Activated CD4-positive, alpha-beta memory T cell treated with anti-CD3 and anti-CD28 coated beads, Interleukin-2, amount 10 ng/mL, durations not matched to agents 7 days and 5 days (primary cell): ENCODE measurements at regions of chr18 and their contacts with region 1.

Region 1: GRCh38 chr18:35290073-35290735 is at the start of gene ZSCAN30:
- DNase-seq: peak; percentile 96
- H3K4me3 Mint-ChIP-seq: peak within 1 kb of the TSS; percentile 90
- H3K27ac Mint-ChIP-seq: peak within 1 kb of the TSS; percentile 90
- H3K4me1 Mint-ChIP-seq: peaks cover 42% of the 10 kb centered on the region
- H3K27me3 Mint-ChIP-seq: no peaks in the 10 kb centered on the region
- total RNA-seq, gene ZSCAN30: 14.6 to 19.2 TPM

Region 2: DNA sequence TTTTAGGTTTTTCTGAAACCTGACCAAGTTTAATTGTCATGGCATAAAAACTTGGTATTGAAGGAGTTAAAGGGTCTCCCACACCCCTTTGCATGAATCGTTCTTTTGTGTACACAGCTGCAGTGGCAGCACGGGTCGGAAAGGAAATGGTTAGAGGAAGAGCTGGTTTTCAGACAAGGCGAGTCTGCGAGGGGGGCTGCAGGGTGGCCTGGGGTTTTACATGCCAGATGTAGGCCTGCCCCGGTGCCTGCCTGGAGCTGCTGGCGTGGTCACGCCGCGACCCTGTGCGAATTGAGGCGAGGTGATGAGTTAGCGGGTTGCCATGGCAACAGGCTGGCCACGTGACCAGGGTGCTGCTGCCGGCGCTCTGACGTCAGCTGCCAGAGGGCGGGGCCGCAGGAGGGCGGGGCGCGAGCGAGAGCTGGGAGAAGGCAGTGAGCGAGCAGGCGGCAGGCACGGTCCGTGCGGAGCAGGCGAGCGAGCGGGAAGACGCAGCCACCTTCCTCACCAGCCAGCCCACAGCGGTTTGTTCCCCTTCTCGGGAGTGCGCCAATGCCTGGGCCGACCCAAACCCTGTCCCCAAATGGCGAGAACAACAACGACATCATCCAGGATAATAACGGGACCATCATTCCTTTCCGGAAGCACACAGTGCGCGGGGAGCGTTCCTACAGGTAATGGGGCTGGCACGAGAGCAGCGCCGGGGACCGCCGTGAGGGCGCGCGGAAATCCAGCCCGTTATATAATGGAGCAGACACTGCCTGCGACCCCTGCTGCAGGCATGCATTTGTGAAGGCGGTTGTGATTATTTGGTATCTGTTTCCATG is 249.0 kb before region 1 on chr18 and contains the start of gene MAPRE2:
- CTCF ChIA-PET with region 1: no interaction called
- POLR2A ChIA-PET with region 1: interaction called, 10 read pairs
- DNase-seq: peak; percentile 99
- H3K4me3 Mint-ChIP-seq: peak within 1 kb of the TSS; percentile 92
- H3K27ac Mint-ChIP-seq: peak within 1 kb of the TSS; percentile 88
- H3K4me1 Mint-ChIP-seq: peaks cover 45% of the 10 kb centered on the region
- H3K27me3 Mint-ChIP-seq: no peaks in the 10 kb centered on the region
- total RNA-seq, gene MAPRE2: 39.2 to 45.2 TPM

Region 3: GRCh38 chr18:35240664-35241447 is 49.3 kb before region 1 on chr18 and contains the start of gene ZNF397:
- CTCF ChIA-PET with region 1: interaction called, 4 read pairs
- POLR2A ChIA-PET with region 1: interaction called, 45 read pairs
- DNase-seq: peak; percentile 95
- H3K4me3 Mint-ChIP-seq: peak within 1 kb of the TSS; percentile 92
- H3K27ac Mint-ChIP-seq: peak within 1 kb of the TSS; percentile 95
- H3K4me1 Mint-ChIP-seq: peaks cover 10% of the 10 kb centered on the region
- H3K27me3 Mint-ChIP-seq: no peaks in the 10 kb centered on the region
- total RNA-seq, gene ZNF397: 14.4 to 16.1 TPM

Region 4: DNA sequence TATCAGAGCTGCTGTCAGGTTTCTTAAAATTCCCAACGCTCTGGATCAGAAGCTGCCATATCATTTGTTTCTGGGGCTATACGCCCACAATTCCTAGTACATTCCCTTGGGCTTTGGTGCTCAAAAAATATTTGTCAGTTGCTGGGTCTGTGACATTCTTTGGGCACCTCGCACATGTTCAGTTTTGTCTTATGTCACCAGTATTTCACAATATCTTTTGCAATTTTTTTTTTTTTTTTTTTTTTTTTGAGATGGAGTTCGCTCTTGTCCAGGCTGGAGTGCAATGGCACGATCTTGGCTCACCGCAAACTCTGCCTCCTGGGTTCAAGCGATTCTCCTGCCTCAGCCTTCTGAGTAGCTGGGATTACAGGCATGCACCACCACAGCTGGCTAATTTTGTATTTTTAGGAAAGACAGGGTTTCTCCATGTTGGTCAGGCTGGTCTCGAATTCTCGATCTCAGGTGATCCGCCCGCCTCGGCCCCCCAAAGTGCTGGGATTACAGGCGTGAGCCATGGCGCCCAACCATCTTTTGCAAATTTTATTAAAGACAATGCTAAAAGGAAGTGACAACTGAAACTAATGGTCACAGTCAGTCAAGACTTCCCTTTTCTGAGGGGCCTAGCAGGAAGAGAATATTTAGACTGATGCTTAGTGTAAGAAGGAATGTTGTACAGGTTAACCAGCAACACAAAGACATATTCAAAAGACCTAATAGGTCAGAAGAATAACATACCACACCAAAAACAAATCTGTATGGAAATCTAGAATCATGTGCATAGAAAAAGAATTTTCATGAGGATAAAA is 42.6 kb before region 1 on chr18:
- CTCF ChIA-PET with region 1: interaction called, 4 read pairs
- POLR2A ChIA-PET with region 1: interaction called, 13 read pairs
- DNase-seq: no peak
- H3K4me3 Mint-ChIP-seq: no peak overlapping the region
- H3K27ac Mint-ChIP-seq: no peak overlapping the region
- H3K4me1 Mint-ChIP-seq: no peaks in the 10 kb centered on the region
- H3K27me3 Mint-ChIP-seq: no peaks in the 10 kb centered on the region

Region 5: DNA sequence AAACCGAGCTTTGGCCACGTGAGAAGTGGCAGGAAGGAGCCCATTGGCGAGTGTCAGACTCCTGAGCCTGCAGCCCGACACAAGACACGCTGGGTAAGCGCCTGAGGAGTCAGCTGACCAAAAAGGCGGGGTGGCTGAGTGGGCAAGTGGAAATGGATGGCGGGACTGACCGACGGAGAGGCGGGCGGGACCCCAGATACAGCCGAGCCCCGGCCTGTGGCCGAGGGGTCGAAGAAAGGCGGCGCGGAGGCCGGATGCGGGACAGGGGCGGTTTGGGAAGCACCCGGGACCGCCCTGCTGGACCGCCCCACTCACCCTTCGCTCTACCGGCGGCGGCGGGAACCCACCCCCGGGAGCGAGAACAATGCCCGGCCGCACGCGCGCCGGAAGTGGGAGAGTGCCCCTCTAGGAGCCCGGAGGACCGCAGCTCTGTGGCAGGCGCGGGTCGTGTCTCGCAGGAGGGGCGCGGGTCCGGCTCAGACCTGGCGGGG is 23.0 kb before region 1 on chr18:
- CTCF ChIA-PET with region 1: no interaction called
- POLR2A ChIA-PET with region 1: interaction called, 27 read pairs
- DNase-seq: peak; percentile 49
- H3K4me3 Mint-ChIP-seq: peak overlapping the region; percentile 76
- H3K27ac Mint-ChIP-seq: peak overlapping the region; percentile 66
- H3K4me1 Mint-ChIP-seq: peaks cover 21% of the 10 kb centered on the region
- H3K27me3 Mint-ChIP-seq: no peaks in the 10 kb centered on the region

Region 6: DNA sequence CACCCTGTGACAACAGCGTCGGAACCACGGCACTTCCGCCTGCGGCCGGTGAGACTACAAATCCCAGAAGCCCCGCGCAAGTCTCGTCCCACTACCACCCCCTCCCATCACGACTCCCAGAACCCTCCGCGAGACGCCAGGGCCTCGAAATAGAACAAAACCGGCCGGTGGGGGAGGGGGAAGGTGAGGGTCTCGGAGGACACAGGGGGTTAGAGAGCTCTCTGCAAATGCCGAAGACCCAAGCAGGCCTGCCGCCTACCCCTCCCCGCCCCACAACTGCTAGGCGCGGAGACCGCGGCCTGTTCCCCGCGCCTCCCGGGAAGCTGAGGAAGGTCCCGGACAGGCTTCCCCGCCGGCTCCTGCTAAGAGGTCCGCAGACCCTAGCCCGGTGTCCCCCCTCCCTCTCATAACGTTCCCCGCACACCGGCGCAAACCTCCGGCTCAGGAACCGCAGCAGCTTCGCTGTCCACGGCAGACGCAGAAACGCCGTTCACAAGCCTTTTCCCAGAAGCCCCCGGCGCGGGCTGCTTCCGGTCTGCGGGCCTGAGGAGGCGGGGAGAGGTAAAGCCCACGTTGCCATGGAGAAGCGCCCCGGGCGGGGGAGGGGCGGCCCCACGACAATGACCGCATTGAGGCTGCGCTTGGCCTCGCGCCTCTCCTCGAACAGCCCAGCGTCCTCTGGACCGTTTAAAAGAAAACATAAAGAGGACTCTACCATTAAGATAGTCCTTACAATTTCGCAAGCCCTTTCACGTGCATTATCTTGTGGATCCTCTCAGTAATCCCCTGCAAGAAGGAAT is 53.9 kb after region 1 on chr18 and contains the start of gene ZNF24:
- CTCF ChIA-PET with region 1: interaction called, 5 read pairs
- POLR2A ChIA-PET with region 1: interaction called, 35 read pairs
- DNase-seq: peak; percentile 92
- H3K4me3 Mint-ChIP-seq: peak within 1 kb of the TSS; percentile 100
- H3K27ac Mint-ChIP-seq: peak within 1 kb of the TSS; percentile 92
- H3K4me1 Mint-ChIP-seq: peaks cover 33% of the 10 kb centered on the region
- H3K27me3 Mint-ChIP-seq: no peaks in the 10 kb centered on the region
- total RNA-seq, gene ZNF24: 53.9 to 55.2 TPM